T-cell (primary cell): ENCODE measurements at regions of chr2 and their contacts with region 1.

Region 1: DNA sequence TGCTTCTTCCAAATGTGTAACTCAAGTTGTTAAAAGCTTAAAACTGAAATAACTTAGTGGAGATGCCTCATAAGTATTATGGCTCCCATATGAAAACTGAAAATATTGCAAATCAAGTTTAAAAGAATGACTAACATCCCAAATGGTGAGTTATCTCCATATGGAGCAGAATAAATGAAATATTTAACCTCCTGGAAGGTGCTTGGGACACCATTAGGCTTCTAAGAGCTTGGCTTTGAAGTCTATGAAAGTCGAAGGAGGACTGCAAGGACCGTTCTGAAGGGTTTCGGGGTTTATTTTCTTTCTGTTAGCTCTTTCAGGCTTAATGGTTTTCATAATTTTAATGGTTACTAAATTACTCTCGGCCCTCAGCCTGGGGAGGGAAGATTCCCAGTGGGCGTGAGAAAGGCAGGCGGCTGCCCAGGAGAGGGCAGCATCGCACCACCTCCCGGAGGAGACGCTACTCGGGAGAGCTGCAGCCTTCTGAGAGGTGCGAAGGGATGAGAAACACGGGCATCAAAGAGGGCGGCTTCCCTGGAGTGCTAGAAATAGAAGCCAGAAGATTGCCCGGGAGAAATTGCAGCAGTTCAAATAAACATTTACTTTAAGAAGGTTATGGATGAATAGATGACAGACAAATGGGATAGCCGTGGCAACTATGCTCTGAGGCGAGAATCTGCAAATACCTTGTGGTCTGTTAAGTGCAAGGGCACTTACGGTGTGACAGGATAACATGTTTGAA is 43.1 kb downstream of the MAP3K19 start:
- DNase-seq: peak; percentile 25 to 79 (median 56)
- ATAC-seq: peak; percentile 87 to 92 (median 90)
- H3K4me3 ChIP-seq: no peak overlapping the region
- H3K4me3 Mint-ChIP-seq: no peak overlapping the region
- H3K27ac ChIP-seq: no peak overlapping the region
- H3K27ac Mint-ChIP-seq: peak overlapping the region in 1 of 2 donors; percentile 55
- H3K4me1 ChIP-seq: peaks cover 0 to 5% of the 10 kb centered on the region in 2 experiments
- H3K4me1 Mint-ChIP-seq: peaks cover 4 to 7% (median 6%) of the 10 kb centered on the region in 3 donors
- H3K27me3 ChIP-seq: peaks cover 3 to 17% of the 10 kb centered on the region in 2 experiments
- H3K27me3 Mint-ChIP-seq: peaks cover 5 to 21% of the 10 kb centered on the region in 2 donors

Region 2: DNA sequence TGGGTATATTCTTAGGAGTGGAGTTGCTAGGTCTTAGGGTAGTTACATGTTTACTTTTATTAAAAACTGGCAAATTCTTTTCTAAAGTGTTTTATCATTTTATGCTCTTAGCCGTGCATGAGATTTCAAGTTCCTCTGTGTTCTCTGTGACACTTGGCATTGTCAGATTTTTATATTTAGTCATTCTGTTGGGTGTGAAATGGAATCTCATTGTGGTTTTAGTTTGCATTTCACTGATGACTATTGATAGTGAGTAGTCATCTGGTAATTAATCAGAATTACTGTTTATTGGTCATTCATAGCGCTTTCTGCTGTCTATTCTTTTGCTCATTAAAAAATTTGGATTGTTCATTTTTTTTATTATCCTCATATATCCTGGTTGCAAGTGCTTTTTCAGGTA is 82.0 kb after region 1 on chr2:
- CTCF ChIA-PET with region 1: no interaction called
- POLR2A ChIA-PET with region 1: no interaction called
- DNase-seq: no peak
- ATAC-seq: no peak
- H3K4me3 ChIP-seq: no peak overlapping the region
- H3K4me3 Mint-ChIP-seq: no peak overlapping the region
- H3K27ac ChIP-seq: no peak overlapping the region
- H3K27ac Mint-ChIP-seq: peak overlapping the region in 1 of 2 donors; percentile 21
- H3K4me1 ChIP-seq: peaks cover 0 to 3% of the 10 kb centered on the region in 2 experiments
- H3K4me1 Mint-ChIP-seq: peaks cover 33 to 41% (median 39%) of the 10 kb centered on the region in 3 donors
- H3K27me3 ChIP-seq: no peaks in the 10 kb centered on the region
- H3K27me3 Mint-ChIP-seq: no peaks in the 10 kb centered on the region

Region 3: DNA sequence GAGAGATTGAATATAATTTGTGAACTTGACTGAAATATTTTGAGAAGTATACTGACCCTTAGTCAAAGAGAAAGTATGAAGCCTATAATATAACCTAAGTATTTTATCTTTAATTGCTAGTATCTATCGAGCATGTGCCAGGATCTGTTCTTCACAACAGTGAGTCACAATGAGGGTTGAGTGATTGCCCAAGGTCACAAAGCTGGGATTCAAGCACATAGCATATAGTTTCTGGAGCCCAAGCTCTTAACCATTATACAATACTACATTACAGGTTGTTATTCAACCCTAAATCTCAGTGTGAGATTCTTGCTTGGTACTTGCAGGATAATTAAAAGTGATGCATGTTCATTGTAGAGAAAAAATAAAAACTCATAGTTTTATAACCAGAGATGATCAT is 145.1 kb after region 1 on chr2:
- CTCF ChIA-PET with region 1: interaction called in 1 of 2 experiments, 11 read pairs
- POLR2A ChIA-PET with region 1: no interaction called
- DNase-seq: no peak
- ATAC-seq: no peak
- H3K4me3 ChIP-seq: no peak overlapping the region
- H3K4me3 Mint-ChIP-seq: no peak overlapping the region
- H3K27ac ChIP-seq: no peak overlapping the region
- H3K27ac Mint-ChIP-seq: no peak overlapping the region
- H3K4me1 ChIP-seq: no peaks in the 10 kb centered on the region
- H3K4me1 Mint-ChIP-seq: peaks cover 9 to 14% (median 13%) of the 10 kb centered on the region in 3 donors
- H3K27me3 ChIP-seq: no peaks in the 10 kb centered on the region
- H3K27me3 Mint-ChIP-seq: no peaks in the 10 kb centered on the region

Region 4: GRCh38 chr2:135600915-135601314 is 596.7 kb after region 1 on chr2:
- CTCF ChIA-PET with region 1: interaction called, 6 to 11 read pairs
- POLR2A ChIA-PET with region 1: no interaction called
- DNase-seq: peak in 1 of 35 experiments; percentile 41
- ATAC-seq: no peak
- H3K4me3 ChIP-seq: no peak overlapping the region
- H3K4me3 Mint-ChIP-seq: no peak overlapping the region
- H3K27ac ChIP-seq: no peak overlapping the region
- H3K27ac Mint-ChIP-seq: no peak overlapping the region
- H3K4me1 ChIP-seq: no peaks in the 10 kb centered on the region
- H3K4me1 Mint-ChIP-seq: peaks cover 4 to 10% (median 6%) of the 10 kb centered on the region in 3 donors
- H3K27me3 ChIP-seq: no peaks in the 10 kb centered on the region
- H3K27me3 Mint-ChIP-seq: no peaks in the 10 kb centered on the region